PC-9 (cell line): ENCODE measurements at regions of chr22 and their contacts with region 1.

Region 1: GRCh38 chr22:29154364-29155048 is 51.2 kb upstream of the EMID1 start:
- DNase-seq: peak in 1 of 2 experiments; percentile 64
- H3K4me3 ChIP-seq: no peak overlapping the region; the same call in 1 of the 2 replicates
- H3K27ac ChIP-seq: no peak overlapping the region
- H3K4me1 ChIP-seq: 0 out of 2 replicates have a peak, but pooled peaks cover 4% of the 10 kb centered on the region
- H3K27me3 ChIP-seq: no peaks in the 10 kb centered on the region
- CTCF ChIP-seq: peak; percentile 91

Region 2: GRCh38 chr22:28600546-28601143 is 553.9 kb before region 1 on chr22:
- CTCF ChIA-PET with region 1: no interaction called
- POLR2A ChIA-PET with region 1: no interaction called
- intact Hi-C with region 1: loop called (anchors 10 kb)
- DNase-seq: peak in 1 of 2 experiments; percentile 40
- H3K4me3 ChIP-seq: no peak overlapping the region
- H3K27ac ChIP-seq: no peak overlapping the region
- H3K4me1 ChIP-seq: no peaks in the 10 kb centered on the region
- H3K27me3 ChIP-seq: no peaks in the 10 kb centered on the region
- CTCF ChIP-seq: peak; percentile 78

Region 3: GRCh38 chr22:28619236-28619635 is 535.3 kb before region 1 on chr22:
- CTCF ChIA-PET with region 1: interaction called, 10 read pairs
- POLR2A ChIA-PET with region 1: no interaction called
- intact Hi-C with region 1: no loop called
- DNase-seq: no peak
- H3K4me3 ChIP-seq: no peak overlapping the region
- H3K27ac ChIP-seq: no peak overlapping the region
- H3K4me1 ChIP-seq: no peaks in the 10 kb centered on the region
- H3K27me3 ChIP-seq: no peaks in the 10 kb centered on the region
- CTCF ChIP-seq: no peak

Region 4: GRCh38 chr22:28800308-28801077 is 354.0 kb before region 1 on chr22 and contains the start of gene XBP1:
- CTCF ChIA-PET with region 1: no interaction called
- POLR2A ChIA-PET with region 1: interaction called, 11 read pairs
- intact Hi-C with region 1: no loop called
- DNase-seq: peak; percentile 85
- H3K4me3 ChIP-seq: peak within 1 kb of the TSS; percentile 99
- H3K27ac ChIP-seq: peak within 1 kb of the TSS; percentile 99
- H3K4me1 ChIP-seq: peaks cover 39% of the 10 kb centered on the region
- H3K27me3 ChIP-seq: no peaks in the 10 kb centered on the region
- CTCF ChIP-seq: no peak
- total RNA-seq, gene XBP1: 35.2 and 47.7 TPM in 2 replicates

Region 5: DNA sequence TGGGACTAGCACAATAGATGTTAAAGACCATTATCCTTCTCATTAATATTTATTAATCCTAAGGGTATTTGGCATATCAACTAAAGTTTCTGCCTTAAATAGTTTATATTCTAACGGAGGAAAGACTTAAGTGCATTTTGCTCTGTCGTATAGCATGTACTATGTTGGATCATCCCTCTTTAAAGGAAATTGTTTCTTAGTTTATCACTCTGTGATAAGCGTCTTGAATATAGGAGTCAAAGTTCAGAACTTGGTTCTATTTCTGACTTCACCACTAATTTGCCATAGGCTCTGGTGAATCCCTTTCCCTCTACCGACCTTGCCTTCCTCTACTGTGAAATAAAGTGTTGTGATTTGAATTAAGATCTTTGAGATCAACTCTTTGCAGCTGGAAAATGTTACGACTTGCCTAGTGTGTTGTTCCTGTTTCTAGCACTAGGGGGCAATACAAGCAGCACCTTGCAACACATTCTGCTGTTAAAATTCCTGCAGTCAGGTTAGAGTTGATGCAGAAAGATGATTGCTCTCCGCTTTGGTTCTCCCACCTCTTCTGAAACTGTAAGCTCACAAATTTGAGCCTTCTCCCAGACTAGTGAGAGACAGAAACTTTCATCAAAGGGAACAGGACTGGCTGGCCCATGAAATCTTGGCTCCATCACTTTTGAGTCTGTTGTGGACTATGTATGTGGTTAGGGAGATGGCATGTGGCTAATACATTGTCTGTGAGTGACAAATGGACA is 299.0 kb before region 1 on chr22:
- CTCF ChIA-PET with region 1: no interaction called
- POLR2A ChIA-PET with region 1: no interaction called
- intact Hi-C with region 1: loop called (anchors 2 kb)
- DNase-seq: peak; percentile 17 to 41
- H3K4me3 ChIP-seq: no peak overlapping the region
- H3K27ac ChIP-seq: no peak overlapping the region
- H3K4me1 ChIP-seq: no peaks in the 10 kb centered on the region
- H3K27me3 ChIP-seq: no peaks in the 10 kb centered on the region
- CTCF ChIP-seq: peak; percentile 97

Region 6: GRCh38 chr22:29072193-29072978 is 82.1 kb before region 1 on chr22:
- CTCF ChIA-PET with region 1: interaction called, 19 read pairs
- POLR2A ChIA-PET with region 1: no interaction called
- intact Hi-C with region 1: no loop called
- DNase-seq: peak; percentile 86 to 95
- H3K4me3 ChIP-seq: peak overlapping the region; percentile 35; the same call in 1 of the 2 replicates
- H3K27ac ChIP-seq: no peak overlapping the region
- H3K4me1 ChIP-seq: 0 out of 2 replicates have a peak, but pooled peaks cover 5% of the 10 kb centered on the region
- H3K27me3 ChIP-seq: no peaks in the 10 kb centered on the region
- CTCF ChIP-seq: no peak